Psoas muscle (tissue), 8 donors: ENCODE measurements at regions of chr5 and their contacts with region 1.

Region 1: GRCh38 chr5:57221049-57221568 is 47.2 kb downstream of the GPBP1 start:
- DNase-seq: no peak
- ATAC-seq: peak; percentile 70 to 84 (median 76)
- H3K4me3 ChIP-seq: no peak overlapping the region
- H3K27ac ChIP-seq: no peak overlapping the region
- H3K4me1 ChIP-seq: no peaks in the 10 kb centered on the region
- H3K27me3 ChIP-seq: no peaks in the 10 kb centered on the region
- CTCF ChIP-seq: peak; percentile 95

Region 2: GRCh38 chr5:56951946-56952691 is 269.0 kb before region 1 on chr5 and contains the start of gene MIER3:
- intact Hi-C with region 1: loop called (anchors 5 kb)
- DNase-seq: peak; percentile 82 to 87
- ATAC-seq: peak; percentile 95 to 98 (median 97)
- H3K4me3 ChIP-seq: peak within 1 kb of the TSS; percentile 91
- H3K27ac ChIP-seq: peak within 1 kb of the TSS; percentile 76
- H3K4me1 ChIP-seq: peaks cover 5% of the 10 kb centered on the region
- H3K27me3 ChIP-seq: no peaks in the 10 kb centered on the region
- CTCF ChIP-seq: no peak
- total RNA-seq, gene MIER3: 11.9 to 20.5 (median 14.7) TPM

Region 3: GRCh38 chr5:57054671-57055070 is 166.4 kb before region 1 on chr5:
- intact Hi-C with region 1: no loop called
- DNase-seq: no peak
- ATAC-seq: no peak
- H3K4me3 ChIP-seq: no peak overlapping the region
- H3K27ac ChIP-seq: no peak overlapping the region
- H3K4me1 ChIP-seq: no peaks in the 10 kb centered on the region
- H3K27me3 ChIP-seq: peaks cover 0 to 5% (median 0%) of the 10 kb centered on the region in 3 donors
- CTCF ChIP-seq: no peak

Region 4: GRCh38 chr5:57082441-57083067 is 138.6 kb before region 1 on chr5:
- intact Hi-C with region 1: no loop called
- DNase-seq: no peak
- ATAC-seq: no peak
- H3K4me3 ChIP-seq: no peak overlapping the region
- H3K27ac ChIP-seq: no peak overlapping the region
- H3K4me1 ChIP-seq: no peaks in the 10 kb centered on the region
- H3K27me3 ChIP-seq: no peaks in the 10 kb centered on the region
- CTCF ChIP-seq: no peak

Region 5: DNA sequence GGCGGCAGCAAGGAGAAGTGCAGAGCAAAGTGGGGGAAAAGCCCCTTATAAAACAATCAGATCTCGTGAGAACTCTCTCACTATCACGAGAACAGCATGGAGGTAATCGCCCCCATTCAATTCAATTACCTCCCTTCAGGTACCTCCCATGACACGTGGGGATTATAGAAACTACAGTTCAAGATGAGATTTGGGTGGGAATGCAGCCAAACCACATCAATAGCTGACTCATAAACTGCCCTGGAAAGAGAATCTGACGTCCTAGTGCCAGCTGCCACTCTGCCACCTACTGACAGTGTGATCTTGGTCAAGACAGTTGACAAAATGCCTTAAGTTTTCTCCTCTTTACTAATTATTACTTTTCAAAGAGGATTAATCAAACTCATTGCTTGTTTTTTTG is 81.1 kb after region 1 on chr5:
- intact Hi-C with region 1: no loop called
- DNase-seq: no peak
- ATAC-seq: no peak
- H3K4me3 ChIP-seq: no peak overlapping the region
- H3K27ac ChIP-seq: no peak overlapping the region
- H3K4me1 ChIP-seq: no peaks in the 10 kb centered on the region
- H3K27me3 ChIP-seq: no peaks in the 10 kb centered on the region
- CTCF ChIP-seq: no peak